Heart left ventricle (tissue), 16 donors: ENCODE measurements at regions of chr2 and their contacts with region 1.

Region 1: DNA sequence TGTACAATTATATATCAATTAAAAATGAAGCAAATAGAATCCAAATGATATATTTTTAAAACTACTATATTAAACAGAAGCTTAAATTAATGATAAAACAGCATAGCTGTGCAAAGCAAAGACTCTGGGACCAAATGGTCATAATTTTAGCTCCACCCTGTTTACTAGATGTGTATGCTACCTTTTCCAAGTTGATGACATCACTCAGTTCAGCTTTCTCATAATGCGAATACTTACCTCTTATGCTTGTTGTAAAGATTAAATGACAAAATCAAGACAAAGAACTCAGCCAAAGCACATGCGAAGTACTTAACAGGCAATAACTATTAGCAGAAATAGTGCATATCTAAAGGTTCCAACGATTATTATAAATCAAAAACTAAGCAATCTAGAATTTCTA is 51.6 kb downstream of the LNPK start:
- DNase-seq: no peak
- ATAC-seq: no peak
- H3K4me3 ChIP-seq: no peak overlapping the region
- H3K27ac ChIP-seq: no peak overlapping the region
- H3K4me1 ChIP-seq: no peaks in the 10 kb centered on the region
- H3K27me3 ChIP-seq: no peaks in the 10 kb centered on the region
- CTCF ChIP-seq: no peak
- POLR2A ChIP-seq: no peak

Region 2: GRCh38 chr2:175621821-175622220 is 328.7 kb before region 1 on chr2:
- intact Hi-C with region 1: no loop called
- DNase-seq: no peak
- ATAC-seq: no peak
- H3K4me3 ChIP-seq: no peak overlapping the region
- H3K27ac ChIP-seq: no peak overlapping the region
- H3K4me1 ChIP-seq: no peaks in the 10 kb centered on the region
- H3K27me3 ChIP-seq: peaks cover 0 to 7% (median 0%) of the 10 kb centered on the region in 9 donors
- CTCF ChIP-seq: no peak
- POLR2A ChIP-seq: no peak

Region 3: GRCh38 chr2:175964195-175964594 is 13.7 kb after region 1 on chr2:
- intact Hi-C with region 1: loop called in 1 of 10 experiments (anchors 1 kb)
- DNase-seq: no peak
- ATAC-seq: no peak
- H3K4me3 ChIP-seq: no peak overlapping the region
- H3K27ac ChIP-seq: no peak overlapping the region
- H3K4me1 ChIP-seq: no peaks in the 10 kb centered on the region
- H3K27me3 ChIP-seq: no peaks in the 10 kb centered on the region
- CTCF ChIP-seq: no peak
- POLR2A ChIP-seq: no peak

Region 4: DNA sequence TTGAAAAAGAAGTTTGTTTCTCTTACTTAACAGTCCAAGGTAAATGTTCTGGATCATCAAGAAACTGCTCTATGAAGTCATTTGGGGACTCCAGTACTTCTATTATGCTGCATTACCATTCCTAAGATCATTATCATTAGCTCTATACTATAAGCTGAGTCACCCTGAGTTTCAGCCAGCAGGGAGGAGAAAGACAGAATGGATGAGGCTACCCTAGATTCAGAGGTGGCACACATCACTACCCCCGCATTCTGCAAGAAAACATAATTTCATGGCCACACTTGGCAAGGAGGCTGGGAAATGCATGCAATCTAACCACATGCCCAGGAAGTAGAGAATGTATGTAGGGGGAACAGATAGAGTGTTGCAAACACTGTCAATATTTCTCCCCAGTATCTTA is 68.2 kb after region 1 on chr2:
- intact Hi-C with region 1: no loop called
- DNase-seq: no peak
- ATAC-seq: no peak
- H3K4me3 ChIP-seq: no peak overlapping the region
- H3K27ac ChIP-seq: no peak overlapping the region
- H3K4me1 ChIP-seq: no peaks in the 10 kb centered on the region
- H3K27me3 ChIP-seq: peaks cover 0 to 5% (median 0%) of the 10 kb centered on the region in 9 donors
- CTCF ChIP-seq: no peak
- POLR2A ChIP-seq: no peak